Caco-2 (cell line): ENCODE measurements at regions of chr5 and their contacts with region 1.

Region 1: GRCh38 chr5:95283761-95284415 is 1.0 kb downstream of the MCTP1 start:
- DNase-seq: peak; percentile 56 to 70
- H3K4me3 ChIP-seq: peak overlapping the region; percentile 72
- H3K4me3 Mint-ChIP-seq: peak overlapping the region; percentile 71
- H3K27ac Mint-ChIP-seq: no peak overlapping the region
- H3K4me1 ChIP-seq: no peaks in the 10 kb centered on the region
- H3K4me1 Mint-ChIP-seq: peaks cover 6% of the 10 kb centered on the region
- H3K27me3 ChIP-seq: peaks cover 1% of the 10 kb centered on the region
- H3K27me3 Mint-ChIP-seq: peaks cover 29% of the 10 kb centered on the region
- CTCF ChIP-seq: peak; percentile 43 to 59

Region 2: GRCh38 chr5:95261437-95262175 is 22.3 kb before region 1 on chr5:
- CTCF ChIA-PET with region 1: interaction called, 8 read pairs
- POLR2A ChIA-PET with region 1: no interaction called
- intact Hi-C with region 1: loop called (anchors 2 kb)
- DNase-seq: peak in 1 of 2 experiments; percentile 34
- H3K4me3 ChIP-seq: no peak overlapping the region
- H3K4me3 Mint-ChIP-seq: no peak overlapping the region
- H3K27ac Mint-ChIP-seq: no peak overlapping the region
- H3K4me1 ChIP-seq: peaks cover 26% of the 10 kb centered on the region
- H3K4me1 Mint-ChIP-seq: peaks cover 13% of the 10 kb centered on the region
- H3K27me3 ChIP-seq: no peaks in the 10 kb centered on the region
- H3K27me3 Mint-ChIP-seq: no peaks in the 10 kb centered on the region
- CTCF ChIP-seq: peak; percentile 41 to 54

Region 3: GRCh38 chr5:95446009-95446408 is 162.1 kb after region 1 on chr5:
- CTCF ChIA-PET with region 1: no interaction called
- POLR2A ChIA-PET with region 1: no interaction called
- intact Hi-C with region 1: loop called (anchors 10 kb)
- DNase-seq: peak; percentile 19 to 39
- H3K4me3 ChIP-seq: no peak overlapping the region
- H3K4me3 Mint-ChIP-seq: no peak overlapping the region
- H3K27ac Mint-ChIP-seq: no peak overlapping the region
- H3K4me1 ChIP-seq: no peaks in the 10 kb centered on the region
- H3K4me1 Mint-ChIP-seq: no peaks in the 10 kb centered on the region
- H3K27me3 ChIP-seq: no peaks in the 10 kb centered on the region
- H3K27me3 Mint-ChIP-seq: peaks cover 3% of the 10 kb centered on the region
- CTCF ChIP-seq: no peak